ENCODE measurements at regions of chr13 and their contacts with region 1.

Region 1: GRCh38 chr13:66546534-66547379 is 683.4 kb downstream of the PCDH9 start:
- DNase-seq: no peak
- H3K4me3 ChIP-seq: no peak overlapping the region
- H3K27ac ChIP-seq: no peak overlapping the region
- H3K4me1 ChIP-seq: no peaks in the 10 kb centered on the region
- CTCF ChIP-seq: no peak

Region 2: DNA sequence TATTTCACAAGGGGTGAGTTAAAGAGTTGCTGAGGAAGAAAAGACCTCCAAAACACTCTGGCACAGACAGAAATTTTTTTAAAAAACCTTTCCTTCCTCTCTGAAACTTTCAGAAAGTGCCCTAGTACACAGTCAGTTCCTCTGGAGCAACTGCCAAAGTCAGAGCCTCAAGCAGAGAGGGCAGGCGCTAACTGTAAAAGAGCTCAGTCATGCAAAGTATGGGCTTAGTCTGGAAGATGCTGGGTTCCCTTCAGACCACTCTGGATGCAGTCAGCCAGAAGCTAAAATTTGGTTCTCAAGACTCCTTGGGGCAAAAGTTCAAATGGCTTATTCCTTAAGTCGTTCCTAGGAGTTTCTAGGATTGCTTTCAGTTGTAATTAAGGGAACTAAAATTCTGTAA is 11.7 kb after region 1 on chr13:
- CTCF ChIA-PET with region 1: no interaction called
- POLR2A ChIA-PET with region 1: interaction called, 13 read pairs
- intact Hi-C with region 1: no loop called
- DNase-seq: peak; percentile 50
- H3K4me3 ChIP-seq: no peak overlapping the region
- H3K27ac ChIP-seq: peak overlapping the region; percentile 14
- H3K4me1 ChIP-seq: peaks cover 11% of the 10 kb centered on the region
- CTCF ChIP-seq: no peak